ENCODE measurements at regions of chr14 and their contacts with region 1.

Region 1: DNA sequence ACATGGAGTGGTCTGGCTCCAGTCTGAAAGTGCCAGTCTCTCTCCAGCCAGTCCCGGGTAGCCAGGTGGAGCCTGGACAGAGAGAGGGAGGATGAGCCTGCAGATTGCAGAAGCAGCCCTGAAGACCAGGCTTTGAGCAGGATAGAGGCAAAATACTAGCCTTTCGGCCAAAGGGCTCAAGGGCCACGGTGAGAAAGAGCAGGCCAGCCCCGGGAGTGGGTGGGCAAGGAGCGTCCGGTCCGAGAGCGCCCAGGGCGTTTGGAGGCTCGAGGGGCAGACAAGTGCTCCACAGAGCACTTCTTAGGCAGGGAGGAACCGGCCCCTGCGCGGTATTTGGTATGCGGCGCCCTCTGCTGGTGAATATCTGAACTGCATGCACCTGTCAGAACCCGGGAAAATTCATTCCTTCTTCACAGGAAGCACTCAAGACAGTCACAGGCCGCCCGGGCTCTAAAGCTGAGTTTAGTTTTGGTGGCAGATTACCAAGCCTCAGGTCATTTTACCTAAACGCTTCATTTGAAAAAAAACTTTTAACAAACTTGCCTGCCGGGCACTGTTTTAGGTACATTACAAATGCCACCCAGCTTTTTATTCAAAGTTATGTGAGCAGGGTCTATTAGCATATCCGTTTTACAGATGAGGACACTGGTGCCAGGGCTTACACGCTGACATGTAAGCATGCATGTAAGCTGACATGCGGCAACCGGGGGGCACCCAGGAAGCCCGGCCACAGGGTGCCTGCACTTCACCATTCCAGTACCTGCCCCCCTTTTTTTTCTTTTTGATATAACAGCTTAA is 21.0 kb upstream of the PSMC1 start:
- DNase-seq: peak; percentile 50
- ATAC-seq: peak; percentile 95
- H3K4me3 ChIP-seq: peak overlapping the region in 1 of 2 experiments; percentile 19; a peak in 3 of 4 replicates
- H3K27ac ChIP-seq: no peak overlapping the region
- H3K4me1 ChIP-seq: peaks cover 0 to 9% of the 10 kb centered on the region in 2 experiments; a peak in 1 of 4 replicates
- H3K27me3 ChIP-seq: no peaks in the 10 kb centered on the region
- CTCF ChIP-seq: peak; percentile 82 to 91 (median 84)
- POLR2A ChIP-seq: no peak
- RAD21 ChIP-seq: peak; percentile 94

Region 2: GRCh38 chr14:89936658-89937185 is 298.7 kb before region 1 on chr14:
- CTCF ChIA-PET with region 1: interaction called, 17 read pairs
- POLR2A ChIA-PET with region 1: no interaction called
- RAD21 ChIA-PET with region 1: no interaction called
- intact Hi-C with region 1: loop called (anchors 1 kb)
- DNase-seq: no peak
- ATAC-seq: no peak
- H3K4me3 ChIP-seq: no peak overlapping the region
- H3K27ac ChIP-seq: no peak overlapping the region
- H3K4me1 ChIP-seq: 0 out of 4 replicates have a peak, but pooled peaks cover 0 to 3% of the 10 kb centered on the region in 2 experiments
- H3K27me3 ChIP-seq: no peaks in the 10 kb centered on the region
- CTCF ChIP-seq: peak in 1 of 3 experiments; percentile 13; a peak in 1 of 6 replicates
- POLR2A ChIP-seq: no peak
- RAD21 ChIP-seq: no peak; the same call in 1 of the 2 replicates

Region 3: GRCh38 chr14:89954070-89955028 is 281.0 kb before region 1 on chr14 and contains the start of gene EFCAB11:
- CTCF ChIA-PET with region 1: interaction called, 4 read pairs
- POLR2A ChIA-PET with region 1: no interaction called
- RAD21 ChIA-PET with region 1: no interaction called
- intact Hi-C with region 1: loop called (anchors 5 kb)
- DNase-seq: peak; percentile 97
- ATAC-seq: peak; percentile 85
- H3K4me3 ChIP-seq: peak within 1 kb of the TSS; percentile 76 to 88
- H3K27ac ChIP-seq: peak within 1 kb of the TSS; percentile 82
- H3K4me1 ChIP-seq: peaks cover 14 to 21% of the 10 kb centered on the region in 2 experiments; a peak in 3 of 4 replicates
- H3K27me3 ChIP-seq: no peaks in the 10 kb centered on the region
- CTCF ChIP-seq: peak in 2 of 3 experiments; percentile 17 to 45; a peak in 1 of 6 replicates
- POLR2A ChIP-seq: peak; percentile 59
- RAD21 ChIP-seq: peak; percentile 36
- total RNA-seq, gene EFCAB11: 18.1 TPM

Region 4: DNA sequence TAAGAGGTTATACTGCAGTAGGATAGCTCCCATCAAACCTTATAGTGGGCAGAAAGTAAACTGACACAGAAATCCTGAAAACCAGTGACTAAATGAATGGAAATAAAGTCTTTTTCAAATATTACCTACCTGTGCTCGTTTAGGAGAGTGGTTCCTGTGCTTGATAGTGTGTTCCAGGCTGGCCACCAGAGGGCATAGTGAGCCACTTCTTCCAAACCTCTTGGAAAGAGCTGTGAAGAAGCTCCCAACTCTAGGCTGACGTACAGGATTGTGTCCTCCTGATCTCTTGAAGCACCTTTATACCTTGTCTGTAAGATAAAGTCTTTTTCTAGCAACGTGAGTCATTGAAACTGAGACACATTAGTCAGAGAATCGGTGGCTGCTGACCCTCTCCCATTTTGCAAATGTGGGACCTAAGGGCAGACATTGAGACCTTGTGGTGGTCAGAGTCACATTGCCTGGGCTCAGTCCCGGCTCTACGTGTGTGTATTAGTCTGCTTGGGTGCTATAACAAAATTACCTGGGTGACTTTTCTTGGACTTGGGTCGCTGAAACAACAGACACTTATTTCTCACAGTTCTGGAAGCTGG is 262.0 kb before region 1 on chr14:
- CTCF ChIA-PET with region 1: interaction called, 33 read pairs
- POLR2A ChIA-PET with region 1: no interaction called
- RAD21 ChIA-PET with region 1: interaction called in 1 of 2 experiments, 3 read pairs
- intact Hi-C with region 1: loop called (anchors 1 kb)
- DNase-seq: peak; percentile 35
- ATAC-seq: peak; percentile 97
- H3K4me3 ChIP-seq: no peak overlapping the region
- H3K27ac ChIP-seq: no peak overlapping the region
- H3K4me1 ChIP-seq: no peaks in the 10 kb centered on the region
- H3K27me3 ChIP-seq: no peaks in the 10 kb centered on the region
- CTCF ChIP-seq: peak; percentile 65 to 86 (median 80)
- POLR2A ChIP-seq: no peak
- RAD21 ChIP-seq: peak; percentile 70

Region 5: GRCh38 chr14:90114550-90114949 is 120.8 kb before region 1 on chr14:
- CTCF ChIA-PET with region 1: interaction called, 4 read pairs
- POLR2A ChIA-PET with region 1: no interaction called
- RAD21 ChIA-PET with region 1: no interaction called
- intact Hi-C with region 1: loop called (anchors 2 kb)
- DNase-seq: no peak
- ATAC-seq: no peak
- H3K4me3 ChIP-seq: no peak overlapping the region
- H3K27ac ChIP-seq: no peak overlapping the region
- H3K4me1 ChIP-seq: peaks cover 14 to 23% of the 10 kb centered on the region in 2 experiments
- H3K27me3 ChIP-seq: no peaks in the 10 kb centered on the region
- CTCF ChIP-seq: peak; percentile 3 to 45 (median 29); a peak in 3 of 6 replicates
- POLR2A ChIP-seq: no peak
- RAD21 ChIP-seq: no peak